Endothelial cell of umbilical vein (primary cell): ENCODE measurements at regions of chr1 and their contacts with region 1.

Region 1: DNA sequence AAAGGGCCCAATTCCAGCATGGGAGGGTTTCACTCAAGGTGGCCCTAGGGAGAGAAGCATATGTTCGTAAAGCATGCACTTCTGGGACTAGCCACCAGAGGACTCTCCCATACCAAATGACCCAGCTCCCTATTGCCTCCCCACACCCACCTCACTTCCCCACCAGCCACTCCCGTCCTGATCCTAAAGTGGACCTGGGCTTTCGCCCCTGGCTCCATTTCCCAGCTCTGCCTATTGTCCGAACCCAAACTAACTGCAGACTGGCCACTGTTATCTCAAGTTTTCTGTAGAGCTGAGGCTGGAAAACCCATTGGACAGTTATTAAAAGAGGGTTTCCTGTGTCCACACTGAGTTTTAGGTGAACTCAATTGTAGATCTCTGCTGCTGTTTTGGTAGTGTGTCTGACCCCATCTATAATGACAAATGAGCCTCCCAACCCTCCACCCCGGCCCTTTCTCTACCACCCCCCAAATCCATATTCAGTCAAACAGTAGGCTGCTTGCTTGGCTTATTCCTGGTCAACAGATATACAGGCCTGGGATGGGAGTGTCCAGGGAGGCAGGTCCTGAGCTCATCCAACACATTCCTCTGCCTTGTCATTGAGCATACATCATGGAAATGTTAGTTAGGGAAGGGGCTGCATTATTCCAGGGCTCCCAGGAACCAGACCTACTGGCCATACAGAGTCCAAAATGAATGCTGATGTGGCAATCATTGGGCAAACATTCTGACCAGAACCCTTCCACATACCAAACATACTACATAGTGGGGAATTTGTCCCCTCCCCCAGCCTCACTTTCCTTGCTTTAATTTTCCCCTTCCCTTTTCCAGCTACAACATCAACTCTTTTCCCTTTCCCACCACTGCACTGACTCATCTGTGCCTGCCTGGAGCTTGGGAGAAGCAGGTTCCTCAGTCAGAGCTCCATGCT is 59.2 kb downstream of the ABCA4 start:
- DNase-seq: peak; percentile 86
- H3K4me3 ChIP-seq: no peak overlapping the region
- H3K27ac ChIP-seq: peak overlapping the region; percentile 76
- H3K4me1 ChIP-seq: peaks cover 48% of the 10 kb centered on the region
- H3K27me3 ChIP-seq: no peaks in the 10 kb centered on the region
- CTCF ChIP-seq: peak; percentile 92 to 93
- POLR2A ChIP-seq: peak; percentile 36

Region 2: GRCh38 chr1:94081566-94082344 is 20.0 kb after region 1 on chr1:
- CTCF ChIA-PET with region 1: interaction called, 18 read pairs
- POLR2A ChIA-PET with region 1: no interaction called
- dilution Hi-C with region 1: no loop called
- intact Hi-C with region 1: no loop called
- DNase-seq: no peak
- H3K4me3 ChIP-seq: no peak overlapping the region
- H3K27ac ChIP-seq: no peak overlapping the region
- H3K4me1 ChIP-seq: peaks cover 7% of the 10 kb centered on the region
- H3K27me3 ChIP-seq: no peaks in the 10 kb centered on the region
- CTCF ChIP-seq: no peak
- POLR2A ChIP-seq: no peak

Region 3: GRCh38 chr1:94154989-94155388 is 93.2 kb after region 1 on chr1:
- CTCF ChIA-PET with region 1: interaction called, 26 read pairs
- POLR2A ChIA-PET with region 1: no interaction called
- dilution Hi-C with region 1: no loop called
- intact Hi-C with region 1: loop called (anchors 1 kb)
- DNase-seq: peak; percentile 70
- H3K4me3 ChIP-seq: no peak overlapping the region
- H3K27ac ChIP-seq: no peak overlapping the region
- H3K4me1 ChIP-seq: peaks cover 3% of the 10 kb centered on the region
- H3K27me3 ChIP-seq: no peaks in the 10 kb centered on the region
- CTCF ChIP-seq: no peak
- POLR2A ChIP-seq: no peak

Region 4: DNA sequence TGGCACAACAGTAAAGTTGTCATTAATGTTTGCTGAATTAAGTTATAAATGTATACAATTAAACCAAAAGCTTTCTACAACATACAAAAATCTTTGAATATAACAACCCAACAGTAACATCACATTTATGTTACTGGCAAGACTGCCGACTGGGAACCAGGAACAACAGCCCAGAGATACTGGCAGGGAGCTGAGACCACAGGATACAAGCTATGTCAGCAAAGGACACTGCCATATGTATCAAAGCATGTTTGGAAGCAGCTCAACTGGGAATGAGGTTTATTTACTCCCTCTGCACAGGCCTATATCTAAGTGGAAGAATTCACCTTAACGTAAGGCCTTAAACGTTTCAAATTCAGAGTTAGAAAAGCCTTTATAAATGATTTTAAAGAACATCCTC is 125.2 kb after region 1 on chr1:
- CTCF ChIA-PET with region 1: interaction called, 45 read pairs
- POLR2A ChIA-PET with region 1: interaction called, 3 read pairs
- dilution Hi-C with region 1: no loop called
- intact Hi-C with region 1: no loop called
- DNase-seq: no peak
- H3K4me3 ChIP-seq: no peak overlapping the region
- H3K27ac ChIP-seq: peak overlapping the region; percentile 5
- H3K4me1 ChIP-seq: peaks cover 25% of the 10 kb centered on the region
- H3K27me3 ChIP-seq: no peaks in the 10 kb centered on the region
- CTCF ChIP-seq: no peak
- POLR2A ChIP-seq: no peak

Region 5: GRCh38 chr1:94237291-94238226 is 175.8 kb after region 1 on chr1 and contains the start of gene ARHGAP29:
- CTCF ChIA-PET with region 1: interaction called, 22 read pairs
- POLR2A ChIA-PET with region 1: interaction called, 13 read pairs
- dilution Hi-C with region 1: no loop called
- intact Hi-C with region 1: loop called (anchors 1 kb)
- DNase-seq: peak; percentile 86
- H3K4me3 ChIP-seq: peak within 1 kb of the TSS; percentile 88 to 100 (median 95)
- H3K27ac ChIP-seq: peak within 1 kb of the TSS; percentile 93
- H3K4me1 ChIP-seq: peaks cover 67% of the 10 kb centered on the region
- H3K27me3 ChIP-seq: no peaks in the 10 kb centered on the region
- CTCF ChIP-seq: no peak
- POLR2A ChIP-seq: peak; percentile 83
- total RNA-seq, gene ARHGAP29: 199 and 215 TPM in 2 replicates

Region 6: DNA sequence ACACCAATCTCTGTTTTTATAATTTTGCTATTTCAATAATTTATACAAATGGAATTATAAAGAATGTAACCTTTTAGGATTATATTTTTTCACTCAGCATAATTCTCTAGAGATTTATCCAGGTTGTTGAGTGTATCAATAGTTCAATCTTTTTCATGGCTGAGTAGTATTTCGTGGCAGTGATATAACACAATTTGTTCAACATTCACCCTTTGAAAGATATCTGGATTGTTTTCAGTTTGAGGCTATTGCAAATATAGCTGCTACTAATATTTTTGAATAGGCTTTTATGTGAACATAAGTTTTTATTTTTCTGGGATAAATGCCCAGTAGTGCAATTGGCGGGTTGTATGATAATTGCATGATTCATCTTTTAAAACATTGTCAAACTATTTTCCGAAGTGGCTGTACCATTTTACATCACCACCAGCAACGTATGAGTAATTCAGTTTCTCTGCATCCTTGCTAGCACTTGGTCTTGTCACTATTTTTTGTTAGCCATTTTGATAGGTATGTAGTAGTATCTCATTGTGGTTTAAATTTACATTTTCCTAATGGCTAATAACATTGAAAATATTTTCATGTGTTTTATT is 300.8 kb after region 1 on chr1:
- CTCF ChIA-PET with region 1: no interaction called
- POLR2A ChIA-PET with region 1: no interaction called
- dilution Hi-C with region 1: no loop called
- intact Hi-C with region 1: no loop called
- DNase-seq: no peak
- H3K4me3 ChIP-seq: no peak overlapping the region
- H3K27ac ChIP-seq: no peak overlapping the region
- H3K4me1 ChIP-seq: no peaks in the 10 kb centered on the region
- H3K27me3 ChIP-seq: peaks cover 12 to 15% of the 10 kb centered on the region in 2 experiments
- CTCF ChIP-seq: no peak
- POLR2A ChIP-seq: no peak